Activated T-helper 2 cell treated with anti-CD3 and anti-CD28 coated beads, Interferon-gamma antibody, Interleukin-2, Interleukin-4, amounts not matched to agents 10 μg/mL and 5 μg/mL and 100 μg/mL, durations not matched to agents 14 hours and 24 hours and 36 hours (primary cell): ENCODE measurements at regions of chr4 and their contacts with region 1.

Region 1: GRCh38 chr4:48906206-48907173 is at the start of gene OCIAD2:
- DNase-seq: peak; percentile 71
- H3K4me3 Mint-ChIP-seq: peak within 1 kb of the TSS; percentile 89
- H3K27ac Mint-ChIP-seq: peak within 1 kb of the TSS; percentile 81
- H3K4me1 Mint-ChIP-seq: peaks cover 26% of the 10 kb centered on the region
- H3K27me3 Mint-ChIP-seq: no peaks in the 10 kb centered on the region
- total RNA-seq, gene OCIAD2: 53.5 and 63.0 TPM in 2 replicates

Region 2: GRCh38 chr4:48578132-48578968 is 328.1 kb before region 1 on chr4:
- intact Hi-C with region 1: loop called (anchors 2 kb)
- DNase-seq: peak; percentile 14
- H3K4me3 Mint-ChIP-seq: no peak overlapping the region
- H3K27ac Mint-ChIP-seq: no peak overlapping the region
- H3K4me1 Mint-ChIP-seq: no peaks in the 10 kb centered on the region
- H3K27me3 Mint-ChIP-seq: no peaks in the 10 kb centered on the region

Region 3: GRCh38 chr4:48681856-48682255 is 224.6 kb before region 1 on chr4:
- intact Hi-C with region 1: loop called (anchors 5 kb)
- DNase-seq: no peak
- H3K4me3 Mint-ChIP-seq: no peak overlapping the region
- H3K27ac Mint-ChIP-seq: peak overlapping the region; percentile 55
- H3K4me1 Mint-ChIP-seq: peaks cover 24% of the 10 kb centered on the region
- H3K27me3 Mint-ChIP-seq: no peaks in the 10 kb centered on the region

Region 4: GRCh38 chr4:48739560-48740019 is 166.9 kb before region 1 on chr4:
- intact Hi-C with region 1: loop called (anchors 2 kb)
- DNase-seq: no peak
- H3K4me3 Mint-ChIP-seq: no peak overlapping the region
- H3K27ac Mint-ChIP-seq: peak overlapping the region; percentile 62
- H3K4me1 Mint-ChIP-seq: peaks cover 54% of the 10 kb centered on the region
- H3K27me3 Mint-ChIP-seq: no peaks in the 10 kb centered on the region

Region 5: DNA sequence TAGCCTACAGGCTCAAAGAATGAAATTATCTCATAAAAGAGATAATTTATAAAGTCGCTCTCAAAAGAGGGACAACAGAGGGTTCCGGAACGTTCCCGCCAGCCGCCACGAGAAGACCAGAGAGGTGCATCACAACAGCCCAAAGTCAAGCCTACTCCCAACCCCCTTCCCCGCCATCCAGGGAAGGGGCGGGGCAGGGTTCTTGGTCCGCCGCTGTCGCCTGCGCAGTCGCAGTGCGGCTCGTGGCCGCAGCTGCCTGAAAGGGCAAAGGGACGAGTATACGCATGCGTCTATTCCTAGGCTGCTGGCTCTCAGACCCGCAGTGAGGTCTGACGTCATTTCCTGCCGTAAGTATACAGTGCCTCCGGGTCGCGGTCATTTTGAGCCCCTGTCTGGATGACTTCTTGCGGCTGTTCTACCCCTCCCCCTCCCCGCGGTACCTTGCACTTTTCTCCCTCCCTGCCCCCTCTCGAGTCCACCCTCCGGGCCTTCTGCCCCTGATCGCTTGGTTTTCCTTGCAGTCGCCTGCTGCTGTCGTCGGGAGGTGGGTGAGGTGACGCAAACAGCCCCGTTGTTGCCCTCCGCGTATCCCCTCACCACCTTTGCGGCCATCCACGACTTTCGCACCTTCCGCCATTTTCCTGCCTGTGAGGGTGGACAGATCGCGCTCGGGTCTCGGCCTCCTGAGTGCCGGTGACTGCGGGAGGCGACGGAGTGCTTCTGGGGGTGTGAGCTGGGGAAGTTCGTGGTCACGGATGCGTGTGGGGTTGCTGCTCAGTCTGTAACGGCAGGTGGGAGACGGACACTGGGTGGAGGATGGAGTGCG is 75.6 kb before region 1 on chr4 and contains the start of gene OCIAD1:
- intact Hi-C with region 1: loop called (anchors 1 kb)
- DNase-seq: peak; percentile 94
- H3K4me3 Mint-ChIP-seq: peak within 1 kb of the TSS; percentile 100
- H3K27ac Mint-ChIP-seq: peak within 1 kb of the TSS; percentile 100
- H3K4me1 Mint-ChIP-seq: peaks cover 20% of the 10 kb centered on the region
- H3K27me3 Mint-ChIP-seq: peaks cover 8% of the 10 kb centered on the region
- total RNA-seq, gene OCIAD1: 114 and 116 TPM in 2 replicates